CD14-positive monocyte (primary cell): ENCODE measurements at regions of chr16 and their contacts with region 1.

Region 1: DNA sequence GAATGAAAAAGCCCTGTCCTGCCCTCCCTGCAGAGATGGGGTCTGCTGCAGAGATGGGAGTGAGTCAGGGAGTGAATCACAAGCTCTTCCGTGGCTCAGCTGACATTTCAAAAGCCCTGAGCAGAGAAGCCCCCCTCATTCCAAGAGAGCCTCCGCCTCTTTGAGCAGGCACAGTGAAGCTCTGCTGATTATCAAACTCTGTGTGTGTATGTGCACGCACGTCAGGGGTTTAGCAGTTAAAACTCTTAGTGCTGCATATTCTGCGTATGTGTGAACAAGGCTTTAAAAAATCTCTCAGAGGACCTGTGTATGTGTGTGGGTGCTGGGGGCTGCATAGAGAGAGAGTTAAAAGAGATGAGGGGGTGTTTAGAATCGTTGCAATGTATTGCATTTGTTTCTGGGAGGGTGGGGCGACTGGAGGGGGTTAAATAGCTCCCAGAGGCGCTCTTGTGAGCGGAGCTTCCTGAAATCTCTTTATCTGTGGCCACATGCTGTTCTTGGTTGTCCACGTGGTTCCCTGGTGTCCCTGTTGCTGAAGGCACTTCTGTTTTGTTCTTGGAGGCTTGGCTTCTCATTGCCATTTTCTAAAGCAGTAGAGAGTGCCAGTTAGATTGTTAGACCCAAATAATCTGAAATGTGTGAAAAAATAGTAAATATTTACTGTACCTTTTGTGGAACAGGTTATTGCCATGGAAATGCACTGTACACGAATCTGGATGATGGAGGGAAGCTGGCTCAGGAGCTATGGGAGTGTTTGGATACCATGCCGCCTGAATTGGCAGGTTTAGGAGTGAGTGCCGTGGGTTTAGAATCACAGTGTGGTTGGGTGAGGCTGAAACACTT is 116.6 kb downstream of the PRKCB start:
- DNase-seq: peak; percentile 53 to 85 (median 59)
- H3K4me3 ChIP-seq: peak overlapping the region in 1 of 3 experiments; percentile 42
- H3K4me3 Mint-ChIP-seq: peak overlapping the region; percentile 54 to 79
- H3K27ac ChIP-seq: peak overlapping the region; percentile 53 to 76
- H3K27ac Mint-ChIP-seq: peak overlapping the region; percentile 74 to 92 (median 87)
- H3K4me1 ChIP-seq: peaks cover 52 to 54% of the 10 kb centered on the region in 2 donors
- H3K4me1 Mint-ChIP-seq: peaks cover 66% of the 10 kb centered on the region
- H3K27me3 ChIP-seq: no peaks in the 10 kb centered on the region
- H3K27me3 Mint-ChIP-seq: no peaks in the 10 kb centered on the region
- CTCF ChIP-seq: no peak

Region 2: DNA sequence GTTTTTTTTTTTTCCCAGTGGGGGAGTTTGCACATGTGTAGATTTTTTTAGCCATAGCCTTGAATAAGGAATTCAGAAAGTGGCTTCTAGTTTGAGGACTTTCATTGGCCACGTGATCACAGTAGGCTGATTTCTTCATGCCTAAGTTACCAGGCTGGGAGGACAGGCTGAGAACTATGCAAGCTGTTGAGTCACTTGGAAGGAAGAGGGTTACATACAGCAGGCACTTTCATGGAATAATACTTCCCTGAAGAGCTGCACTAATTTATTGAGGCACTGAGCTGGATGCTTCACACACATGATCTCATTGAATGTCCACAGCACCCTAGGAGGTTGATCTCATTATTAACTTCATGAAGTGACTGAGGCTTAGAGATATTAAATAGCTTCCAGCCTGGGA is 93.8 kb before region 1 on chr16:
- intact Hi-C with region 1: loop called in 1 of 2 experiments (anchors 5 kb)
- DNase-seq: peak; percentile 75 to 96 (median 84)
- H3K4me3 ChIP-seq: peak overlapping the region in 1 of 3 experiments; percentile 53
- H3K4me3 Mint-ChIP-seq: peak overlapping the region; percentile 24 to 62
- H3K27ac ChIP-seq: peak overlapping the region; percentile 85 to 87
- H3K27ac Mint-ChIP-seq: peak overlapping the region; percentile 93 to 98 (median 95)
- H3K4me1 ChIP-seq: peaks cover 98 to 100% of the 10 kb centered on the region in 2 donors
- H3K4me1 Mint-ChIP-seq: peaks cover 96% of the 10 kb centered on the region
- H3K27me3 ChIP-seq: no peaks in the 10 kb centered on the region
- H3K27me3 Mint-ChIP-seq: no peaks in the 10 kb centered on the region
- CTCF ChIP-seq: no peak

Region 3: DNA sequence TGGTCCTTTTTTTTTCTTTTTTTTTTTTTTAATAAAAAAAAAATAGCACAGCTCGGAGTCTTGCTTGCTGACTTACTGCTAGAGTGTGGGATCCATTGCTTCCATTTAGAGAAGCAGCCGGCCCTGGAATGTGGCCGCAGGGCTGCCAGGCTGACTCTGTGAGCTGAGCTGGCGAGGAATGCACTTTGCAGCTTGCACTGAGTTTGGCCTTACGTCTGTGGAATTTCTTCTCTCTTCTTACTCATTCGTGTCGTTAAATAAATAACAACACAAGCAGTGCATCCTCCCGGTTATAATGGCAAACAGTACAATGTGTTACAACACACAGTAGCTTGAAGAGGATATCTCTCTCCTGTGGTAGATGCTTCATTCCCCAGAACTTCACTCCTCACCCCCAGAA is 47.3 kb before region 1 on chr16:
- intact Hi-C with region 1: no loop called
- DNase-seq: no peak
- H3K4me3 ChIP-seq: no peak overlapping the region
- H3K4me3 Mint-ChIP-seq: no peak overlapping the region
- H3K27ac ChIP-seq: no peak overlapping the region
- H3K27ac Mint-ChIP-seq: no peak overlapping the region
- H3K4me1 ChIP-seq: peaks cover 25 to 41% of the 10 kb centered on the region in 2 donors
- H3K4me1 Mint-ChIP-seq: peaks cover 74% of the 10 kb centered on the region
- H3K27me3 ChIP-seq: no peaks in the 10 kb centered on the region
- H3K27me3 Mint-ChIP-seq: peaks cover 0 to 2% (median 0%) of the 10 kb centered on the region in 3 donors
- CTCF ChIP-seq: no peak

Region 4: DNA sequence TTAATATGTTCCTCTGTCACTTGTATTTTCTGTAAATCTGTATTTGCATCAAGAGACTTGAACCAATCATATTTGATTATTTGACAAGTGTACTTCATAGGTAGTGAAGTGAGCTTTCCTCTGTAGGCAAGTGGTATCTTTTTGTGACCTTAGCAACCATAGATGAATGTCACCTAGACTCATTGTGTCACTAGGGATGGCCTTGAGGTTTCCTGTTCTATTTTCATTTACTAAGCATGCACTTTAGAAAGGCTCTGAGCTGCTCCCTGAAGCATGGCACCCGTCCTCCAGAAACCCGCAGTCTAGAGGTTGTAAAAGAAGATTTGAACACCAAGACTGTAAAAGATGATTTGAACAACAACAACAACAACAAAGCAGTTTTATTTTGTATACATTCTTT is 35.1 kb after region 1 on chr16:
- intact Hi-C with region 1: no loop called
- DNase-seq: no peak
- H3K4me3 ChIP-seq: no peak overlapping the region
- H3K4me3 Mint-ChIP-seq: no peak overlapping the region
- H3K27ac ChIP-seq: no peak overlapping the region
- H3K27ac Mint-ChIP-seq: no peak overlapping the region
- H3K4me1 ChIP-seq: no peaks in the 10 kb centered on the region
- H3K4me1 Mint-ChIP-seq: no peaks in the 10 kb centered on the region
- H3K27me3 ChIP-seq: no peaks in the 10 kb centered on the region
- H3K27me3 Mint-ChIP-seq: peaks cover 0 to 2% (median 0%) of the 10 kb centered on the region in 3 donors
- CTCF ChIP-seq: no peak

Region 5: GRCh38 chr16:24010440-24011089 is 58.2 kb after region 1 on chr16:
- intact Hi-C with region 1: loop called in 1 of 2 experiments (anchors 5 kb)
- DNase-seq: peak; percentile 75 to 83 (median 78)
- H3K4me3 ChIP-seq: no peak overlapping the region
- H3K4me3 Mint-ChIP-seq: no peak overlapping the region
- H3K27ac ChIP-seq: peak overlapping the region in 1 of 2 donors; percentile 67
- H3K27ac Mint-ChIP-seq: peak overlapping the region; percentile 55 to 93 (median 84)
- H3K4me1 ChIP-seq: peaks cover 49 to 62% of the 10 kb centered on the region in 2 donors
- H3K4me1 Mint-ChIP-seq: peaks cover 69% of the 10 kb centered on the region
- H3K27me3 ChIP-seq: no peaks in the 10 kb centered on the region
- H3K27me3 Mint-ChIP-seq: no peaks in the 10 kb centered on the region
- CTCF ChIP-seq: peak; percentile 94

Region 6: GRCh38 chr16:24834459-24835335 is 882.3 kb after region 1 on chr16:
- intact Hi-C with region 1: no loop called
- DNase-seq: no peak
- H3K4me3 ChIP-seq: no peak overlapping the region
- H3K4me3 Mint-ChIP-seq: no peak overlapping the region
- H3K27ac ChIP-seq: no peak overlapping the region
- H3K27ac Mint-ChIP-seq: no peak overlapping the region
- H3K4me1 ChIP-seq: peaks cover 10 to 12% of the 10 kb centered on the region in 2 donors
- H3K4me1 Mint-ChIP-seq: peaks cover 13% of the 10 kb centered on the region
- H3K27me3 ChIP-seq: no peaks in the 10 kb centered on the region
- H3K27me3 Mint-ChIP-seq: peaks cover 0 to 3% (median 2%) of the 10 kb centered on the region in 3 donors
- CTCF ChIP-seq: no peak